ENCODE measurements at regions of chr3 and their contacts with region 1.

Region 1: GRCh38 chr3:67384760-67385397 is 269.5 kb downstream of the SUCLG2 start:
- DNase-seq: peak; percentile 39
- H3K4me3 ChIP-seq: no peak overlapping the region
- H3K27ac ChIP-seq: no peak overlapping the region
- H3K4me1 ChIP-seq: no peaks in the 10 kb centered on the region
- H3K27me3 ChIP-seq: no peaks in the 10 kb centered on the region
- CTCF ChIP-seq: peak; percentile 65

Region 2: GRCh38 chr3:67790043-67790442 is 405.2 kb after region 1 on chr3:
- CTCF ChIA-PET with region 1: no interaction called
- POLR2A ChIA-PET with region 1: no interaction called
- intact Hi-C with region 1: loop called (anchors 2 kb)
- DNase-seq: peak; percentile 38
- H3K4me3 ChIP-seq: no peak overlapping the region
- H3K27ac ChIP-seq: no peak overlapping the region
- H3K4me1 ChIP-seq: no peaks in the 10 kb centered on the region
- H3K27me3 ChIP-seq: no peaks in the 10 kb centered on the region
- CTCF ChIP-seq: peak; percentile 56

Region 3: DNA sequence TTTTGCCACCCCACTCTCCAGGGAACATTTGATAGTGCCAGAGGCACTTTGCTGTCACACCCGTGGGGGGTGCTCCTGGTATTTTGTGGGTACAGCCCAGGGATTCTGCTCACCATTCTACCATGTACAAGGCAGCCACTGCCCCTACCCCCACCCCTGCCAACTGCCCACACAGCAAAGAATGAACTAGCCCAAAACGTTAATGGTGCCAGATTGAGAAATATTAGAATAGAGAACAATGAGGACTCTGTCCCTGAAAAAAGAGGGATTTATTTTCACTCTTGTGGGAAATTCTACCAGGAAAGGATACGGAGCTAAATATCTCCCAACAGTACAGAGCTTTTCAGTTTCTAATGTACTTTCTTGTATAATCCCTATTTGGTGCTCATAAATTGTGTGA is 424.0 kb after region 1 on chr3:
- CTCF ChIA-PET with region 1: no interaction called
- POLR2A ChIA-PET with region 1: no interaction called
- intact Hi-C with region 1: loop called (anchors 5 kb)
- DNase-seq: no peak
- H3K4me3 ChIP-seq: no peak overlapping the region
- H3K27ac ChIP-seq: no peak overlapping the region
- H3K4me1 ChIP-seq: no peaks in the 10 kb centered on the region
- H3K27me3 ChIP-seq: no peaks in the 10 kb centered on the region
- CTCF ChIP-seq: no peak

Region 4: DNA sequence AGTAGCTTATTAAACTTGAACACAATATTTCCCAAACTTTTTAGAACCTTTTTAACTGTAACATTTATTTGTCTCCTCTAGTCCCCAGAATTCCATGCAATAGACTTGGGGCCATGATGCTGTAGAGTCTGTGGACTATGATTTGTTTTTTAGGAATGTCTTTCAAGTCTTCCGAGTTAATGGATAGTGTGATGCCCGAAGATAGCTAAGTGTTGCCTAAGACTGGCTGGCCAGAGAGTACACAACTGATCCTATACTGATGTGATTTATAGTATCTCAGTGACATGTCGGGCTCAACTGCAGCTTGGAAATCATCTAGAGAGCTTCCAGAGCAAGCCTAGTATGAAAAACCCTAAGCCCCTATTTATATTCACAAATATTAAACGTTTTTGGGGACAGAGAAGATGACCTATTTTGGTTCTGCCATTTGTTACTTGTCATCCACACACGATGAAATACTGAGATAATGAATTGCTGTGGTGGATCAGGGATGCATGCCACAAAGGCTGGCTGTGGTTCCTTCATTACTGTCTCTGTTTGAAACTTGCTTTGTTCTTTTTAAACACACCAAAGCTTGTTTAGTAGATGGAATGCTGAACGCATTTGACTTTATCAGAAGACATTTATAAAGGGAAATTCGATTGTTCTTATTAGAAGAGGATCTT is 1040.0 kb after region 1 on chr3:
- CTCF ChIA-PET with region 1: no interaction called
- POLR2A ChIA-PET with region 1: no interaction called
- intact Hi-C with region 1: no loop called
- DNase-seq: no peak
- H3K4me3 ChIP-seq: no peak overlapping the region
- H3K27ac ChIP-seq: no peak overlapping the region
- H3K4me1 ChIP-seq: no peaks in the 10 kb centered on the region
- H3K27me3 ChIP-seq: no peaks in the 10 kb centered on the region
- CTCF ChIP-seq: no peak